Endothelial cell of umbilical vein (primary cell): ENCODE measurements at regions of chr12 and their contacts with region 1.

Region 1: DNA sequence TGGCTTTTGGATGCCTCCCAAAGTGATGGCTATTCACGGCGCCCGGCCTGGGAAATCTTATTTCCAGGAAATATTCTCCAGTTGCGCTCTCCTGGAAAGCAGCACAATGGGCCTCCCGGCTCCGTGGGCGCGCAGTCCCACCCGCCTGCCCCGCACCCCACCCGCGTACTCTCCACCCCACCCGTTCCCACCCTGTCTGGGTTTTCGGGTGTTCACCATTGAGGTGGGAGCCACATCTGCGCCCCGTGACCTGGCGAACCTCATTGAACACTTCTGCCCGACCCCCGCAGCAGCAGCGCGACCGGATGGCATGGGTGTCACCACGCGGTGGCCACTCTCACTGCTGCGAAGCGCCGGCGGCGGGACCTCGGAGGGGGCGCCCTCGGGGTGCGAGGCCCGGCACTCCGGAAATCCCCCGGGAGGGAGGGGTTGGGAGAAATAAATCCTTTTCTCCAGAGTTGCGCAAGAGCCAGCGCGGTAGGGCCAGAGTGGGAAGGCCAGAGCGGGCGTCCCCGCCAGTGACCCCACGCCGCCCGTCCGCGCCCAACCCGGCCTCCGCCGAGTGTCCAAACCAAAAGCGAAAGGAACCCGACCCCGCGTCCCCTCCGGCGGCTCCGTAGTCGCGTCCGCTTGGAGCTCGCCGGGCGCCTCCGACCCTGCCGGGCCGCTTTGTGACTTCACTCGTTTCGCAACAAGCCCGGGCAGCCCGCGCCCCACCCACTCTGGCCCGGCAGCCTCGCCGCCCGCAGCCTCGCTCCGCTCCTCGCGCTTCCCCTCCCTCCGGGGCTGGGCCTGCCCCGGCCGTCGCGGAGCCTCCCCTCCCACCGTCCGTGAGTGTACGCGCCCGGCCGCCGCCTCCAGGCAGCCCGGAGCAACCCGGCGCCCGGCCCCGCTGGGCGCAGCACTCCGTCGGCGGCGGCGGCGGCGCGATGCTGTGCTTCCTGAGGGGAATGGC is at the start of gene DRAM1:
- DNase-seq: peak; percentile 88
- H3K4me3 ChIP-seq: peak within 1 kb of the TSS; percentile 5 to 76 (median 55)
- H3K27ac ChIP-seq: peak within 1 kb of the TSS; percentile 93
- H3K4me1 ChIP-seq: peaks cover 26% of the 10 kb centered on the region
- H3K27me3 ChIP-seq: no peaks in the 10 kb centered on the region
- CTCF ChIP-seq: peak in 1 of 2 donors; percentile 19
- POLR2A ChIP-seq: peak; percentile 92
- total RNA-seq, gene DRAM1: 42.4 and 46.3 TPM in 2 replicates

Region 2: DNA sequence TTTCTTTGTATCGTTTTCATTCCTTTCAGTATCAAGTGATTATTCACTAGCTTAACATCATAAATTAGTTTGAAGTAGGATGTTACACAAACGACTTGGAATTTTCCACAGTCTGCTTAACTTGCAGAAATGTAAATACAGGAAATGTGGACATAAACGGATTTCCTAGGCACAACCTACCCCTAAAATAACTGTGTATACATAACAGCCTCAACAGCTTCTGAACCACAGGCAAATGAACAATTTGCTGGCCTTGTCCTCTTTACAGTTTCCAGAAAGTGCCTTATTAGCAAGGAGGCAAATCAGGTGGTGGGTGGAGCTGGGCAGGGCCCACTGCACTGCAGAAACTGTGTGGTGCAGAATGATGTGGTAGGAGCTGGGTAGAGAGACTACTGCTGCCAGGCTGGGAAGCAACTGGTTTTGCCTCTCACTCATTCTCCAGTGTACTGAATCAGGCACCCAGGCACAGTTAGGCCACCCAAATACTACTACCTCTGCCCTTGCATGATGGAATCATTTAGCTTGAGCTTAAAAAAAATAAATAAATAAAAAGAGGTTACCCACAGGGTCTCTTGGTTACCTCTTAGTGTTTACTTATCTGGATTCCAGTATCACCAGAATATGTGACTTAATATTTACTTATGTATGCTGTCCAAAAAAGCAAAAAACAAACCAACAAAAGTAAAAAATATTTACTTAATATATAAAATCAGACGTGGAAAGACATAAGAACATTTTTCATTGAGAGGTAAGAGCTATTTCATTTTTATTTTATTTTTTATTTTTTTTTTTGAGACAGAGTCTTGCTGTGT is 14.5 kb after region 1 on chr12:
- CTCF ChIA-PET with region 1: interaction called, 19 read pairs
- POLR2A ChIA-PET with region 1: interaction called, 16 read pairs
- dilution Hi-C with region 1: no loop called
- intact Hi-C with region 1: loop called (anchors 1 kb)
- DNase-seq: peak; percentile 95
- H3K4me3 ChIP-seq: peak overlapping the region in 1 of 3 experiments; percentile 31
- H3K27ac ChIP-seq: peak overlapping the region; percentile 56
- H3K4me1 ChIP-seq: peaks cover 40% of the 10 kb centered on the region
- H3K27me3 ChIP-seq: no peaks in the 10 kb centered on the region
- CTCF ChIP-seq: no peak
- POLR2A ChIP-seq: no peak

Region 3: GRCh38 chr12:101919447-101919846 is 42.3 kb after region 1 on chr12:
- CTCF ChIA-PET with region 1: no interaction called
- POLR2A ChIA-PET with region 1: no interaction called
- dilution Hi-C with region 1: no loop called
- intact Hi-C with region 1: loop called (anchors 1 kb)
- DNase-seq: no peak
- H3K4me3 ChIP-seq: no peak overlapping the region
- H3K27ac ChIP-seq: no peak overlapping the region
- H3K4me1 ChIP-seq: no peaks in the 10 kb centered on the region
- H3K27me3 ChIP-seq: no peaks in the 10 kb centered on the region
- CTCF ChIP-seq: no peak
- POLR2A ChIP-seq: no peak

Region 4: GRCh38 chr12:102061560-102062418 is 184.7 kb after region 1 on chr12 and contains the start of gene WASHC3:
- CTCF ChIA-PET with region 1: no interaction called
- POLR2A ChIA-PET with region 1: no interaction called
- dilution Hi-C with region 1: no loop called
- intact Hi-C with region 1: loop called (anchors 5 kb)
- DNase-seq: peak; percentile 93
- H3K4me3 ChIP-seq: peak within 1 kb of the TSS; percentile 66 to 94 (median 85)
- H3K27ac ChIP-seq: peak within 1 kb of the TSS; percentile 68
- H3K4me1 ChIP-seq: peaks cover 6% of the 10 kb centered on the region
- H3K27me3 ChIP-seq: no peaks in the 10 kb centered on the region
- CTCF ChIP-seq: no peak
- POLR2A ChIP-seq: peak; percentile 87
- total RNA-seq, gene WASHC3: 26.1 and 27.8 TPM in 2 replicates

Region 5: DNA sequence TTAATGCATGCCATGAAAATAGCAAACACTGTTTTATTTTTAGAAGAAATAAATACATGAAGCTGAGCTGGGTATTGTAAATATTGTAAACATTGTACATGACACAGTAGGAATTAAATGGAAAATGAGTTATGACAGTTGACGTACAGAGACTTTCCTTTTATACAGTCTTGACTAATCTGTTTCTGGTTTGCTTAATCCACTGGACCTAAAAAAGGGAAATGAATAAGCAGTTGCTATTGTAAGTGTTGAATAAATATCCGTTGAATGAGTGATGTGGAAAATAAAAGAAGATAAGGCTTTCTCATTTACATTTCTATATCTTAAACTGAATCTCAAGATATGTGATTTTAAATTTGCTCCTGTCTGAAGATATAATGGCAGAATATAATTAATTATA is 305.5 kb after region 1 on chr12:
- CTCF ChIA-PET with region 1: no interaction called
- POLR2A ChIA-PET with region 1: no interaction called
- dilution Hi-C with region 1: no loop called
- intact Hi-C with region 1: loop called (anchors 10 kb)
- DNase-seq: peak; percentile 91
- H3K4me3 ChIP-seq: no peak overlapping the region
- H3K27ac ChIP-seq: peak overlapping the region; percentile 61
- H3K4me1 ChIP-seq: peaks cover 19% of the 10 kb centered on the region
- H3K27me3 ChIP-seq: no peaks in the 10 kb centered on the region
- CTCF ChIP-seq: no peak
- POLR2A ChIP-seq: peak; percentile 25